ENCODE measurements at regions of chr2 and their contacts with region 1.

Region 1: GRCh38 chr2:108013305-108013704 is 27.0 kb downstream of the SLC5A7 start:
- DNase-seq: no peak

Region 2: GRCh38 chr2:108607706-108608301 is 594.5 kb after region 1 on chr2:
- intact Hi-C with region 1: loop called in 1 of 2 experiments (anchors 5 kb)
- DNase-seq: no peak